Heart right ventricle (tissue), 16 donors: ENCODE measurements at regions of chr18 and their contacts with region 1.

Region 1: DNA sequence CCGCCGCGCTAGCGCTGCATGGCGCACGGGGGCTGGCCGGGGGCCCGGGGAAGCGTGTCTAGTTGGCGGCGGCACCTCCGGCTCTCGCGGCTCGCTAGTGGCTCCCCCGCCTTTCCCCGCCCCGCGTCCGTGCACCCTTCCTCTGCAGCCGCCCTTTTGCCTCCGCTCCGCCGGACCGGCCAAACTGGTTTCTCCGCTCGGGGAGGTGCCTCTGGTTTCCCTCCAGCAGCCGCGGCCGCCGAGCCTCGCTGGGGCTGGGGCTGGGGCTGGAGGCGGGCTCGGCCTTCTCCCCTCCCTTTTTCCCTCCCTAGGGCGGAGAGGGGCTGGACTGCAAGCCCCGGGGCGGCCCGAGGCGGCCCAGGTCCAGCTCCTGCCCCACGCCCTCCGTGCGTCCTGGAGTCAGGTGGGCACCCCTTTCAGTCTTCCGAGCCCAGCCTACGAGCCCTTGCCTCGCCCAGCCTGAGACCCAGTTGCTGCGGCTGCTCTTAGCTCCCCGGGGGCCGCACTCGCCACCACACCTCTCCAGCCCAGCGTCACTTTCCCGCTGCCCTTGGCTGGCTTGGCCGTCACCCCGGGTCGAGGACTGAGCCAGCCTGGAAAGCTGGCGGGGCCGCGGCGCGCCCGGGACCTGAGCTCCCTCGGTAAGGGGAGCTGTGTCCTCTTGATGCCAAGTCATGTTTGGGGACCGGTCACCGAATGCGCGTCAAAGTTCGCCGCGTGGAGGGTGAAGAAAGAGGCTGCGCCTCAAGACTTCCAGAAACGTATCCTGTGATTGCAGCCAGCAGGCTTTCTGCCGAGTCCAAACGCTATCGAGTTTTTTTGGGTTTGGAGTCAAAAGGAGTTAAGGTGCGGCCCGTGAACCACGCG is at the start of gene ATP8B1:
- DNase-seq: peak; percentile 82 to 84
- ATAC-seq: peak; percentile 87 to 96 (median 91)
- H3K4me3 ChIP-seq: peak within 1 kb of the TSS; percentile 69 to 98 (median 90)
- H3K27ac ChIP-seq: peak within 1 kb of the TSS; percentile 81 to 97 (median 92)
- H3K4me1 ChIP-seq: peaks cover 0 to 67% (median 43%) of the 10 kb centered on the region in 9 donors
- H3K27me3 ChIP-seq: peaks cover 0 to 43% (median 0%) of the 10 kb centered on the region in 7 donors
- CTCF ChIP-seq: no peak
- total RNA-seq, gene ATP8B1: 4.1 to 16.5 (median 8.1) TPM

Region 2: DNA sequence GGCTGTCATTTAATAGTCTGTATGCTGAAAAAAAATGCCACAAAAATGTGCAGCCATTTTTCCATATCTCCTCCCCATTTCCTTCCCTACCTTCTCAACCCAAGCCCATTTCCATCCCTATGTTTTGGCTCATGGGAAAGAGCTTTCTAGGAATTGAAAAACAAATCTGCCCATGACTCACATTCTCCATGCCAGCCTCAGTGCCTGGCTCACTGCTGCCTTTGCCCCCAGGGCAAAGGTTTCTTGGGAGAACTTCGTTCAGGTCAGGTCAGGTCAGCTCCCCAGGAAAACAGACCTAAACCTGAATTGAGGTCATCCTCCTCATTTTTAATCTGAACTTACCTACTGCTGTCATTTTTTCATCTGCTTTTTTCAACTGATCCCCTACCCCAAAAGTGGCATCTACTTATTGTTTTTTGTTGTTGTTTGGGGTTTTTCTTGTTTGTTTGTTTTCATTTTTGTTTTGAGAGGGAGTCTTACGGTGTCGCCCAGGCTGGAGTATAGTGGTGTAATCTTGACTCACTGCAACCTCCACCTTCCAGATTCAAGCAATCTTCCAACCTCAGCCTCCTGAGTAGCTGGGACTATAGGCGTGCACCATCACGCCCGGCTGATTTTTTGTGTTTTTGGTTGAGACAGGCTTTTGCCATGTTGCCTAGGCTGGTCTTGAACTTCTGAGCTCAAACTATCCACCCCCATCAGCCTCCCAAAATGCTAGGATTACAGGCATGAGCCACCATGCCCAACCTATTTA is 283.5 kb before region 1 on chr18:
- intact Hi-C with region 1: no loop called
- DNase-seq: no peak
- ATAC-seq: no peak
- H3K4me3 ChIP-seq: no peak overlapping the region
- H3K27ac ChIP-seq: no peak overlapping the region
- H3K4me1 ChIP-seq: peaks cover 0 to 12% (median 0%) of the 10 kb centered on the region in 9 donors
- H3K27me3 ChIP-seq: peaks cover 0 to 8% (median 3%) of the 10 kb centered on the region in 7 donors
- CTCF ChIP-seq: no peak

Region 3: DNA sequence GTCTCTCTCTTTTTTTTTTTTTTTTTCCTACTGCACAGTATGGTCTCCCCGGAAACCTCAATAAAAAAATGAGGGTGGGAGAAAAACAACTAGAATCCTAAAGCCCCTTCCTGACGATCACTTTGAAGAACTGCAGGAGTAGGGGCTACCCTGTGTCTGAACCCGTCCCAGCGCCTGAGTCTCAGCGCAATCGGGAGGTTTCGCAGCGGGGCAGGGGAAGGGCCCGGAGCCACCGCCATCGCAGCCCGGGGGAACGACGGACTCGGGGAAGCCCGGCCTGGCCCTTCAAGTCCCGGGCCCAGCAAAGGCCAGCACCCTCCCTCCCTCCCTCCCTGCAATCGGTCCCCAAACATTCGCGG is 182.1 kb before region 1 on chr18:
- intact Hi-C with region 1: loop called in 1 of 10 experiments (anchors 5 kb)
- DNase-seq: no peak
- ATAC-seq: peak; percentile 10 to 66 (median 46)
- H3K4me3 ChIP-seq: peak overlapping the region; percentile 71 to 89 (median 80)
- H3K27ac ChIP-seq: peak overlapping the region; percentile 72 to 95 (median 90)
- H3K4me1 ChIP-seq: peaks cover 0 to 37% (median 19%) of the 10 kb centered on the region in 9 donors
- H3K27me3 ChIP-seq: no peaks in the 10 kb centered on the region
- CTCF ChIP-seq: no peak

Region 4: DNA sequence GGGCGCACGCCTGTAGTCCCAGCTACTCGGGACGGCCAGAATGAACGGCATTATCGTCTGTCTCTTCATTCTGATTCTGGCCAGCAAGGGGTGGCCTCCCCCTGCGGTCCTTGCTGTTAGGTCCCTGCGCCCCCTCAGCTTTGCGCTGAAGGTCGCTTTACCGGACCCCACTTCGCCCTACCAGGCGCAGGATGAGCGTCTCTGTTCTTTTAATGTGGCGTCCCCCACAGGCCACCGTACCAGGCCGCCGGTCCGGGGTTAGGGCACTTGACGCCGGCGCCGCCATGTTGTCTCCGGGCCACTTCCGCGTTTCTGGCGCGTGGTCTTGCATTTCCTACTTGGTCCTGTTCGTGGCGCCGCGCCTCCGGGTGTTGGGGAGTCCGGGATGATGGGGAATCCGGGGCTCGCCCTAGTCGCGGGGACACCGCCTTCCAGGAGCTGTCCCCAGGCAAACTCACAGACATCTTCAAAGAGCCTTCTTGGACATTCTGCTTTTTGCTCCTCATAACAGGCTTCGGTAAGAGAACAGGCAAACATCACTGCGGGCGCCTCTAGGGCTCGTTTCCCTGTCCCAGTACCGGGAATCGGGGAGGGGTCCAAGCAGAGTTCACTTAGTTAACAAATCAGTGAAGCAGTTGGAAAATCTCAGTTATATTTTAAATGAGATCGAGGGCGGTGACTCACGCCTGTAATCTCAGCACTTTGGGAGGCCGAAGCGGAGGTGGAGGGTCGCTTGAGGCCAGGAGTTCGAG is 173.2 kb before region 1 on chr18:
- intact Hi-C with region 1: loop called in 1 of 10 experiments (anchors 10 kb)
- DNase-seq: peak; percentile 97
- ATAC-seq: peak; percentile 97 to 100 (median 99)
- H3K4me3 ChIP-seq: peak overlapping the region; percentile 50 to 77 (median 64)
- H3K27ac ChIP-seq: peak overlapping the region in 9 of 10 donors; percentile 71 to 91 (median 77)
- H3K4me1 ChIP-seq: peaks cover 0 to 19% (median 7%) of the 10 kb centered on the region in 9 donors
- H3K27me3 ChIP-seq: no peaks in the 10 kb centered on the region
- CTCF ChIP-seq: peak; percentile 39 to 92 (median 78)

Region 5: DNA sequence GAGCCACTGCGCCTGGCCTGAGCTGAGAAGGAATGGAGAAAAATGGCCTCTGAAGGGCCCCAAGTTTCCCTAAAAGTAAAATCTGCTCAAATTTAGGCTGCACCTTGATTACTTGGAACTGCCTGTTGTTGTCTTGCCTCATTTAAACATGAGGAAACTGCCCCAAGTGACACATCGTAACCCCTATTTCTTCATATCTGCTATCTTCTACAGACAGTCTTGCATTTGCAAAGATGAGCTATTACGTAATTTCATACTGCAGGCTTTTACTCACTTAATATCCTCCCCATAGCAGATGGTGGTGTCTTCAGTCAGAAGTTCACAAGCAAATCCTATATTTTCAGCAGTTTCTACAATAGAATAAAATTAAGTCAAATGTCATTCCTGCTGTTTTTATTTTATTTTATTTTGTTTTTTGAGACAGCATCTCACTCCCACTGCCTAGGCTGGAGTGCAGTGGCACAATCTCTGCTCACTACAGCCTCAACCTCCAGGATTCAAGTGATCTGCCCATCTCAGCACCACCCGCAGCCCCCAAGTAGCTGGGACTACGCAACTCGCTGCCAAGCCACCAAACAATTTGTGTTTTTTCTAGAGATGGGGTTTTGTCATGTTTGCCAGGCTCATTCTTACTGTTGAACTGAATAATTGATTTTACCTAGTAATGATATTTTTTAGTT is 136.4 kb before region 1 on chr18:
- intact Hi-C with region 1: loop called in 3 of 10 experiments (anchors 5 to 10 kb)
- DNase-seq: no peak
- ATAC-seq: peak; percentile 19 to 81 (median 46)
- H3K4me3 ChIP-seq: no peak overlapping the region
- H3K27ac ChIP-seq: peak overlapping the region in 7 of 10 donors; percentile 8 to 84 (median 68)
- H3K4me1 ChIP-seq: peaks cover 4 to 52% (median 32%) of the 10 kb centered on the region in 9 donors
- H3K27me3 ChIP-seq: no peaks in the 10 kb centered on the region
- CTCF ChIP-seq: no peak

Region 6: DNA sequence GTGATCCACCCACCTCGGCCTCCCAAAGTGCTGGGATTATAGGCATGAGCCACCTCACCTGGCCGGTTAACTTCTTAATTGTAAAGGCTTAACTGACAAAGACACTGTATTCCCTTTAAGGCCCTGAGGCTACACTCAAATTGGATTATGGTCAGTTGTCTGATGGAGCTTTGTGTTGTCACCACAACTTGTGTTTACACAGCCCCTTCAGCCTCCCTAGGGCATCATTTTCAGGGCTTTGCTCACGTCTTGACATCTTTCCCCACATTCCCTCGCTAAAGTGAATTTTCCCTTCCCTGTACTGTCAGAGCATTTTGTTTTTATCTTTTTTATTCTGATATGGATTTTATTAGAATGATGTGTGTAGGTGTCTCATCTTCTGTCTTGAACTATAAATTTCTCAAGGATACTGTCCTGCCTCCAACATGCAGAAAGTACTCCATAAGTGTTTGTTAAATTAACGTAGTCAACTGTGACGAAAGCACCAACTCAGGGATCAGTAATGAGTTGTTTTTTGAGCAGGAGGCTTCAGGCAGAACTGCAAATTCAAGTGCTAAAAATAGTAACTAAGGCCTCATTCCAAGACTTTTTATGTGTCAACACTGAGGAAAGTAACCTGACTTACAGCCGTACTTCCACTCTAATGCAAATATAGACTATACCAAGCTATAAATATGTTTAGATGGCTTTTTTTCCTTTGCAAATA is 104.6 kb before region 1 on chr18:
- intact Hi-C with region 1: loop called in 2 of 10 experiments (anchors 5 to 10 kb)
- DNase-seq: no peak
- ATAC-seq: peak; percentile 51 to 77 (median 64)
- H3K4me3 ChIP-seq: no peak overlapping the region
- H3K27ac ChIP-seq: peak overlapping the region in 9 of 10 donors; percentile 4 to 74 (median 30)
- H3K4me1 ChIP-seq: peaks cover 0 to 27% (median 9%) of the 10 kb centered on the region in 9 donors
- H3K27me3 ChIP-seq: no peaks in the 10 kb centered on the region
- CTCF ChIP-seq: no peak

Region 7: DNA sequence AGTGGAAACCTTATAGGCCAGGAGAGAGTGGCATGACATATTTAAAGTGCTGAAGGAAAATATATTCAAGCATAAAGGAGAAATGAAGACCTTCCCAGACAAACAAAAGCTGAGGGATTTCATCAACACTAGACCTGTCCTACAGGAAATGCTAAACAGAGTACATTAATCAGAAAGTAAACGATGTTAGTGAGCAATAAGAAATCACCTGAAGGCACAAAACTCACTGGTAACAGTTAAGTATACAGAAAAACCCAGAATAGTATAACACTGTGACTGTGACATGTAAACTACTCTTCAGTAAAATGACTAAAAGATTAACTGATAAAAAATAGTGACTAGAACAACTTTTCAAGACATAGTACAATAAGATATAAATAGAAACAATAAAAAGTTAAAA is 87.7 kb before region 1 on chr18:
- intact Hi-C with region 1: loop called in 1 of 10 experiments (anchors 10 kb)
- DNase-seq: no peak
- ATAC-seq: no peak
- H3K4me3 ChIP-seq: no peak overlapping the region
- H3K27ac ChIP-seq: no peak overlapping the region
- H3K4me1 ChIP-seq: peaks cover 0 to 38% (median 17%) of the 10 kb centered on the region in 9 donors
- H3K27me3 ChIP-seq: no peaks in the 10 kb centered on the region
- CTCF ChIP-seq: no peak

Region 8: GRCh38 chr18:57846258-57846657 is 42.9 kb after region 1 on chr18:
- intact Hi-C with region 1: no loop called
- DNase-seq: peak in 1 of 2 donors; percentile 16
- ATAC-seq: peak; percentile 79 to 98 (median 89)
- H3K4me3 ChIP-seq: no peak overlapping the region
- H3K27ac ChIP-seq: peak overlapping the region in 5 of 10 donors; percentile 15 to 40 (median 21)
- H3K4me1 ChIP-seq: peaks cover 0 to 16% (median 9%) of the 10 kb centered on the region in 9 donors
- H3K27me3 ChIP-seq: no peaks in the 10 kb centered on the region
- CTCF ChIP-seq: no peak

Region 9: GRCh38 chr18:57970356-57971080 is 167.2 kb after region 1 on chr18:
- intact Hi-C with region 1: no loop called
- DNase-seq: no peak
- ATAC-seq: no peak
- H3K4me3 ChIP-seq: no peak overlapping the region
- H3K27ac ChIP-seq: no peak overlapping the region
- H3K4me1 ChIP-seq: no peaks in the 10 kb centered on the region
- H3K27me3 ChIP-seq: no peaks in the 10 kb centered on the region
- CTCF ChIP-seq: no peak